ENCODE measurements at regions of chr10 and their contacts with region 1.

Region 1: DNA sequence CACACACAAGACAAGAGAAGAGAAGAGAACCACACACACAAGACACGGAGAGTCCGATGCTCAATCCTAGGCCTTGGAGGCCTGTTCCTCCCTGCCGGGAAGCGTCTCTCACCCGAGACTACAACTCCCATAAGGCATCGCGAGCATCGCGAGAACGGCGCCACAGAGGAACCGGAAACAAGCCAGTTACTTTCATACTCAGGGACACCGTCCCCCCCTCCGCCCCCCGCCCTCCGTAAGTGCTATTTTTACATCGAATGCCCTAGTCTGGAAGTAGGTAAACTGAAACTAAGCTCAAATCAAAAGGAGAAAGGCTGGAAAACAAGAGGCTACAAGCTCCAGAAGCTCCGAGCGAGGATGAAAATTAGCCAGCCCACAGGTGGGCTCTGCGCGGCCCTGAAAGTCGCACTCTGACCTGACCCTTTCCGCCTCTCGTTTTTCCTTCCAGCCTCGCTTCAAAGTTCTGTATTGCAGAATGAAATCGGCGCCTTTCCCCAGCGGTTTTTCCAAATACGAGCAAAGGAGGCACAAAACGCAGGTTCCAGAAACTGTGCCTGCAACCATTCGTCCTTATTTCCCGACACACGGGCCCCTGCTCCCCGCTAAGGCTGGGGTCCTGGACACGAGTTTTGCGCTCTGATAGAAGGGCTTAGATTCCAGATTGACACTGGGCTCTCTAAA is 11.5 kb upstream of the DNAJC12 start:
- DNase-seq: peak; percentile 81 to 90
- H3K4me3 ChIP-seq: peak overlapping the region; percentile 79
- H3K27ac ChIP-seq: peak overlapping the region; percentile 88
- H3K4me1 ChIP-seq: peaks cover 5% of the 10 kb centered on the region
- H3K27me3 ChIP-seq: no peaks in the 10 kb centered on the region
- CTCF ChIP-seq: no peak

Region 2: GRCh38 chr10:67527354-67527753 is 322.1 kb before region 1 on chr10:
- CTCF ChIA-PET with region 1: interaction called, 10 read pairs
- POLR2A ChIA-PET with region 1: no interaction called
- intact Hi-C with region 1: no loop called
- DNase-seq: no peak
- H3K4me3 ChIP-seq: no peak overlapping the region
- H3K27ac ChIP-seq: no peak overlapping the region
- H3K4me1 ChIP-seq: no peaks in the 10 kb centered on the region
- H3K27me3 ChIP-seq: no peaks in the 10 kb centered on the region
- CTCF ChIP-seq: no peak

Region 3: GRCh38 chr10:67793313-67793712 is 56.2 kb before region 1 on chr10:
- CTCF ChIA-PET with region 1: no interaction called
- POLR2A ChIA-PET with region 1: no interaction called
- intact Hi-C with region 1: no loop called
- DNase-seq: no peak
- H3K4me3 ChIP-seq: no peak overlapping the region
- H3K27ac ChIP-seq: no peak overlapping the region
- H3K4me1 ChIP-seq: peaks cover 15% of the 10 kb centered on the region; the same call in 1 of the 2 replicates
- H3K27me3 ChIP-seq: no peaks in the 10 kb centered on the region
- CTCF ChIP-seq: no peak

Region 4: DNA sequence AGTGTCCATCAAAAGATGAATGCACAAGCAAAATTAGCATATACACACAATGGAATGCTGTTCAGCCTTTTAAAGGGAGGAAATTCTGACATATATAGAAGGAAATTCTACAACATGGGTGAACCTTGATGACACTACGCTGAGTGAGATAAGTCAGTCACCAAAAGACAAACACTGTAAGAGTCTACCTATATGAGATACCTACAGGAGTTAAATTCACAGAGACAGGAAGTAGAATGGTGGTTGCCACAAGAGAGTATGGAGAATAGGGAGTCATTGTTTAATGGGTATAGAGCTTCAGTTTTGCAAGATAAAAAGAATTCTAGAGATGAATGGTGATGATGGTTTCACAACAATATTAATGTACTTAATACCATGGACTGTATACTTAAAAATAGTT is 173.8 kb after region 1 on chr10:
- CTCF ChIA-PET with region 1: no interaction called
- POLR2A ChIA-PET with region 1: no interaction called
- intact Hi-C with region 1: loop called (anchors 10 kb)
- DNase-seq: no peak
- H3K4me3 ChIP-seq: no peak overlapping the region
- H3K27ac ChIP-seq: no peak overlapping the region
- H3K4me1 ChIP-seq: no peaks in the 10 kb centered on the region
- H3K27me3 ChIP-seq: no peaks in the 10 kb centered on the region
- CTCF ChIP-seq: no peak

Measured in PC-9 (cell line).